Lower lobe of right lung (tissue), 2 donors: ENCODE measurements at regions of chr14 and their contacts with region 1.

Region 1: GRCh38 chr14:99884834-99885648 is 91.8 kb downstream of the EML1 start:
- DNase-seq: no peak
- ATAC-seq: peak; percentile 77 to 82
- H3K4me3 ChIP-seq: no peak overlapping the region
- H3K27ac ChIP-seq: no peak overlapping the region
- H3K4me1 ChIP-seq: no peaks in the 10 kb centered on the region
- H3K27me3 ChIP-seq: no peaks in the 10 kb centered on the region
- CTCF ChIP-seq: peak; percentile 79

Region 2: DNA sequence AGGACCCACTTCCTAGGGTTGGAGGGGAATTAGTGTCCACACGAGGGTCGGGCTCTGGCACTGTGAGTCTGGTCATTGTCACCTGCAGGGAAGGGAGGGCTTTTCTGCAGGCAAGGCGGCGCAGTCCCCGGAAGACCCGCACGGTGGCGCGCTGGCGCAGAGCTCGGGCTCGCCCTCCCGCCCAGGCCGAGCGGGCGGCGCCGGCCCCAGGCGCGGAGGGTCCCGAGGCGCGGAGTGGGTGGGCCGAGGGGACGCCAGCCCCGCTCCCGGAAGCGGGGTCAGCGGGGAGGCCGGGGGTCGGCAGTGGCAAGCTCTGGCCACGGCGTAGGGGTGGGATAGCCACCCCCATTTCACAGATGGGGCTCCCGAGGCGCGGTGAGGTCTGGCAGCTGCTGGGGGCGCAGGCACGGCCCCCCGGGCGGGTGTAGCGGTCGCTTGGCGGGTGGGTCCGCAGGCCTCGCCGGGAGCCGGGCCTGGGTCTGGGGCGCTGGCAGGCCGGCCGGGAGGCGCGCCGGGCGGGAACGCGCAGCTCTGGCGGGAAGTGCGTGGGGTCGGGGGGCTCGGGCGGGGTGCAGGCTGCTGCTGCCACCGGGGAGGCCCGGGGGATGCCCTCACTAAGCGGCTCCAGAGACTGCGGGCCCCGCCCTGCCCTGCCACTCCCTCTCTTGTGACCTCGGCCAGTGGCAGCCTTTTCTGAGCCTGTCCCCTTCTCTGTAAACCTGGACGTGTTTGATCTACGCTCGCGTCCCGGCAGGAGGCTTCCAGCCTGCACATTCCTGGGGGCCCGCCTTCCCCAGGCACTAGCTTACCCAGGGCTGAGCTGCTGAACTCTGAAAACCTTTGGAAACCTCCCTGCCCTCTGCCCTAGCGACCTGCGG is 154.8 kb before region 1 on chr14:
- intact Hi-C with region 1: loop called (anchors 10 kb)
- DNase-seq: peak; percentile 78
- ATAC-seq: peak; percentile 76 to 83
- H3K4me3 ChIP-seq: peak overlapping the region; percentile 57
- H3K27ac ChIP-seq: peak overlapping the region; percentile 46
- H3K4me1 ChIP-seq: peaks cover 39% of the 10 kb centered on the region
- H3K27me3 ChIP-seq: peaks cover 18% of the 10 kb centered on the region
- CTCF ChIP-seq: peak; percentile 93